ENCODE measurements at regions of chr12 and their contacts with region 1.

Region 1: DNA sequence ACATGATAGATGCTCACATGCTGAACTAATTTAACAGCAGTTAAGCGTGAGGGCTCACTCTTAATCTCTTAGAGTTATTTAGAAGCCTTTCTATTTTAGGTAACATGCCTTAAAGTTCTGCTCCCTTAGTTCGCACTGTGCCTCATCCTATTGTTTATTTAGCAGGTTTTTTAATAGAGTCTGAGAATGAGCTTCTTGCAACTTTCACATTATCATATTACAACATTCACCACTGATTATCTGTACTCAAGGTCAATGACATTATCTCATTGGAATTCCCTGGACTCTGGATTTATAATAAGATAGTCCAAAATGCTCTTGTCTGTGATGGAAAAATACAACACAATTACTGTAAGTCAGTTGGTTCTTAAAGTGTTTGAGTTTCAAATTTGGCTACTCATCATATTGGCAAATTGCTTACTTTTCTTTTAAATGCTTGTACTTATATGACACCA is 183.6 kb upstream of the SLC38A2 start:
- DNase-seq: peak; percentile 85
- H3K4me3 Mint-ChIP-seq: peak overlapping the region; percentile 17
- H3K27ac Mint-ChIP-seq: peak overlapping the region; percentile 68
- H3K4me1 Mint-ChIP-seq: peaks cover 73% of the 10 kb centered on the region
- H3K27me3 Mint-ChIP-seq: no peaks in the 10 kb centered on the region
- CTCF ChIP-seq: no peak

Region 2: DNA sequence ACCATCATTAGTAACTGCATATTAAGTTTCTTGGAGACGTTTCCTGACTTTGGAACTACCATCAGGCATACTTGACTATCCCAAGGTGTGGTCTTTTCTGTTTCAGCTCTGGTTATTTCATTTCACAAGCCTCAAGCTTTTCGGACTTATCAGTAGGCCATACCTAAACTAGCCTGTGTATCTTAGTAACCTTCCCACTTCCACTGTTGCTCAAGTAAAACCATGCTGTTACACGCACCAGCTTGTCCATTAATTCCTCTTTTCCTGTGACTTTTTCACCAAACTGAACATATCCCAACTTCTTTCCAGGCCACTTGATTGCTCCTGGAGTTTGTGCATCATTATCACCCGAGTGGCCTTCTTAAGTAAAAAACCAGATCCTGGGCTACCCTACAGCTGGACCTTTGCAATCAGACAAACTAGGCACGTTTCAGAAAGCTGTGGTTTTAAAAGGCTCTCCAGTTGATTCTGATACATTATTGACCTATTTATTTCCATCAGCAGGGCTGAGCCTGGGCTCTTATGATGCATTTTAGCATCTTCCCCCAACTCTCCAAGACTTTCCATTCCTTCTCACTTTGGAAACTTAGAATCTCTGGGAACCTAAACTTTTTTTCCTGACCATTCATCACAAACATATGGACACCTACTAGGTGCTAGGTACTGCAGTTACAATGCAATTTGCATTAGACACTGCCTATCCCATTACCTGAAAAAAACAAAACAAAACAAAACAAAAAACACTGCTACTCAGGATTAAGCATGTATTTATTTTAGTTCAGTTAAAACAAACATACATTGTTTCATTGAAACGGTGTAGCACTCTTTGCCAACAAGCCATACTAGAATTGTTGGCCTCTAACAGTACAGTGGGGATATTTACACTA is 198.5 kb before region 1 on chr12:
- CTCF ChIA-PET with region 1: no interaction called
- POLR2A ChIA-PET with region 1: interaction called, 10 read pairs
- intact Hi-C with region 1: no loop called
- DNase-seq: peak; percentile 72
- H3K4me3 Mint-ChIP-seq: no peak overlapping the region
- H3K27ac Mint-ChIP-seq: peak overlapping the region; percentile 7
- H3K4me1 Mint-ChIP-seq: peaks cover 18% of the 10 kb centered on the region
- H3K27me3 Mint-ChIP-seq: no peaks in the 10 kb centered on the region
- CTCF ChIP-seq: no peak

Region 3: GRCh38 chr12:46442239-46442638 is 113.9 kb before region 1 on chr12:
- CTCF ChIA-PET with region 1: no interaction called
- POLR2A ChIA-PET with region 1: interaction called, 21 read pairs
- intact Hi-C with region 1: no loop called
- DNase-seq: peak; percentile 54
- H3K4me3 Mint-ChIP-seq: peak overlapping the region; percentile 28
- H3K27ac Mint-ChIP-seq: peak overlapping the region; percentile 97
- H3K4me1 Mint-ChIP-seq: peaks cover 61% of the 10 kb centered on the region
- H3K27me3 Mint-ChIP-seq: no peaks in the 10 kb centered on the region
- CTCF ChIP-seq: no peak

Region 4: GRCh38 chr12:46473634-46474329 is 82.3 kb before region 1 on chr12:
- CTCF ChIA-PET with region 1: no interaction called
- POLR2A ChIA-PET with region 1: interaction called, 14 read pairs
- intact Hi-C with region 1: loop called (anchors 5 kb)
- DNase-seq: peak; percentile 89
- H3K4me3 Mint-ChIP-seq: peak overlapping the region; percentile 58
- H3K27ac Mint-ChIP-seq: peak overlapping the region; percentile 94
- H3K4me1 Mint-ChIP-seq: peaks cover 44% of the 10 kb centered on the region
- H3K27me3 Mint-ChIP-seq: no peaks in the 10 kb centered on the region
- CTCF ChIP-seq: no peak

Region 5: GRCh38 chr12:46537387-46537955 is 18.7 kb before region 1 on chr12:
- CTCF ChIA-PET with region 1: no interaction called
- POLR2A ChIA-PET with region 1: no interaction called
- intact Hi-C with region 1: no loop called
- DNase-seq: no peak
- H3K4me3 Mint-ChIP-seq: no peak overlapping the region
- H3K27ac Mint-ChIP-seq: no peak overlapping the region
- H3K4me1 Mint-ChIP-seq: no peaks in the 10 kb centered on the region
- H3K27me3 Mint-ChIP-seq: no peaks in the 10 kb centered on the region
- CTCF ChIP-seq: no peak

Region 6: GRCh38 chr12:46661110-46661845 is 105.1 kb after region 1 on chr12:
- CTCF ChIA-PET with region 1: interaction called, 3 read pairs
- POLR2A ChIA-PET with region 1: interaction called, 56 read pairs
- intact Hi-C with region 1: loop called (anchors 2 kb)
- DNase-seq: peak; percentile 79
- H3K4me3 Mint-ChIP-seq: no peak overlapping the region
- H3K27ac Mint-ChIP-seq: peak overlapping the region; percentile 80
- H3K4me1 Mint-ChIP-seq: peaks cover 63% of the 10 kb centered on the region
- H3K27me3 Mint-ChIP-seq: no peaks in the 10 kb centered on the region
- CTCF ChIP-seq: peak; percentile 57